PC-3 (cell line): ENCODE measurements at regions of chr9 and their contacts with region 1.

Region 1: GRCh38 chr9:103721056-103721455 is 373.1 kb upstream of the SMC2 start:
- DNase-seq: no peak
- ATAC-seq: no peak
- H3K4me3 ChIP-seq: no peak overlapping the region
- H3K27ac ChIP-seq: no peak overlapping the region
- H3K4me1 ChIP-seq: no peaks in the 10 kb centered on the region
- H3K27me3 ChIP-seq: no peaks in the 10 kb centered on the region
- CTCF ChIP-seq: no peak

Region 2: DNA sequence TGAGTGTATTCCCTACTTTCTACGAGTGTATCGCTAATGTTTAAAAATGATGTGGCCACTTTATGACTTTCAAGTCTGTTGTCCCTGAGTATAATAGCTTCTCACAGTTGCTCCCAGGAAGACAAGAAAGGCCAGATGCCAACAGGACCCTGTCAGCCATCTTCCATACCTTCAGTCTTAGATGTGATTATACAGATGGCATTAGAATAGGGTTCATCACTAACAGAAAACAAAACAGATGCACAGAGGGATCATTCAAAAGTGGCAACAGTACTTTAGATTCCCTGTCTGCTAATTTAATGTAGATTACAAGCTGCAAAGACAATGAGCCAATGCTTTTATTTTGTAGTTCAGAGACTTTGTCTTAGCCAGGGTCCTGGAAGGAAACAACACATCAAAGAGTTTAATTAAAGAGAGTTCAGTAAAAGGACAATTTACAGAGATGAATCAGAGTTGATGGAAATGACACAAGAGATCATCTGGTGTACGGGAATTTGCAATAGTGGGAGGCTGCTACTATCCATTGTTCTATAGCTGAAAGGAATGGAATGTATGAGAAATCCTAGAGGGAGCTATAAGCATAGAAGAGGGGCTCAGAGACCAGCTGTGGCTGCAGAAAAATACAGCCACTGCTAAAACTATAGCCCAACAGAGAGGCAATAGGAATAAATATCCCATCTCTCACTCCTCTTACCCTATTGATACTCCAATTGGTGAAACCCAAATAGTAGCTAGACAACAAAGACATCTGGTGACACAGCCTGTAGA is 20.7 kb before region 1 on chr9:
- CTCF ChIA-PET with region 1: no interaction called
- POLR2A ChIA-PET with region 1: no interaction called
- intact Hi-C with region 1: no loop called
- DNase-seq: no peak
- ATAC-seq: no peak
- H3K4me3 ChIP-seq: no peak overlapping the region
- H3K27ac ChIP-seq: no peak overlapping the region
- H3K4me1 ChIP-seq: no peaks in the 10 kb centered on the region
- H3K27me3 ChIP-seq: no peaks in the 10 kb centered on the region
- CTCF ChIP-seq: no peak

Region 3: DNA sequence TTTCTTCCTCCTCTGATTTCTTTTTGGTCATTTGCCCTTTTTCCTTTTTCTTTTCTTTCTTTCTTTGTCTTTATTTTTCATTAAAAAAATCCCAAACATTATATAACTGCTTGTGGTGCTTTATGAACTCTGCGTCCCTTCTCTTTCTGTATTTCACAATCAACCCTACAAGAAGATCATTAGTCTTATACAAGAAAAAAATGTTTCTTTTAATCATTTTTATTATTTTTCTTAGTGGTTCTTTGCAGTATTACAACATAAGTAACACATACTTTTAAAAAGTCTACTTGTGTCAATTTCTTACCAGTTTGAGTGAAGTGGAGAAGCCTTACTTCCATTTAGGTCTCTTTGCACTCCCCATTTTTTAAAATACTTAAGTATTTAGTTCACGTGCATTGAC is 160.4 kb after region 1 on chr9:
- CTCF ChIA-PET with region 1: no interaction called
- POLR2A ChIA-PET with region 1: no interaction called
- intact Hi-C with region 1: no loop called
- DNase-seq: no peak
- ATAC-seq: no peak
- H3K4me3 ChIP-seq: no peak overlapping the region
- H3K27ac ChIP-seq: no peak overlapping the region
- H3K4me1 ChIP-seq: no peaks in the 10 kb centered on the region
- H3K27me3 ChIP-seq: no peaks in the 10 kb centered on the region
- CTCF ChIP-seq: no peak

Region 4: GRCh38 chr9:104118916-104119315 is 397.9 kb after region 1 on chr9:
- CTCF ChIA-PET with region 1: no interaction called
- POLR2A ChIA-PET with region 1: no interaction called
- intact Hi-C with region 1: loop called (anchors 10 kb)
- DNase-seq: no peak
- ATAC-seq: no peak
- H3K4me3 ChIP-seq: no peak overlapping the region
- H3K27ac ChIP-seq: no peak overlapping the region
- H3K4me1 ChIP-seq: no peaks in the 10 kb centered on the region
- H3K27me3 ChIP-seq: no peaks in the 10 kb centered on the region
- CTCF ChIP-seq: no peak